CD4-positive, alpha-beta T cell (primary cell): ENCODE measurements at regions of chr12 and their contacts with region 1.

Region 1: GRCh38 chr12:55973598-55974307 is at the start of gene RAB5B:
- DNase-seq: peak; percentile 92 to 100 (median 96)
- ATAC-seq: peak; percentile 86
- H3K4me3 ChIP-seq: peak within 1 kb of the TSS; percentile 74
- H3K4me3 Mint-ChIP-seq: no peak within 1 kb of the TSS
- H3K27ac ChIP-seq: peak within 1 kb of the TSS; percentile 82 to 86
- H3K27ac Mint-ChIP-seq: no peak within 1 kb of the TSS
- H3K4me1 ChIP-seq: peaks cover 26% of the 10 kb centered on the region
- H3K4me1 Mint-ChIP-seq: peaks cover 18% of the 10 kb centered on the region
- H3K27me3 ChIP-seq: no peaks in the 10 kb centered on the region
- H3K27me3 Mint-ChIP-seq: no peaks in the 10 kb centered on the region
- CTCF ChIP-seq: no peak
- total RNA-seq, gene RAB5B: 21.6 to 27.4 TPM

Region 2: GRCh38 chr12:55829967-55830600 is 143.7 kb before region 1 on chr12:
- CTCF ChIA-PET with region 1: no interaction called
- POLR2A ChIA-PET with region 1: interaction called, 39 read pairs
- intact Hi-C with region 1: no loop called
- DNase-seq: peak in 11 of 14 experiments; percentile 4 to 54 (median 21)
- ATAC-seq: peak; percentile 23
- H3K4me3 ChIP-seq: peak overlapping the region; percentile 98
- H3K4me3 Mint-ChIP-seq: peak overlapping the region; percentile 100
- H3K27ac ChIP-seq: peak overlapping the region; percentile 52 to 70
- H3K27ac Mint-ChIP-seq: peak overlapping the region; percentile 88
- H3K4me1 ChIP-seq: peaks cover 58% of the 10 kb centered on the region
- H3K4me1 Mint-ChIP-seq: peaks cover 61% of the 10 kb centered on the region
- H3K27me3 ChIP-seq: no peaks in the 10 kb centered on the region
- H3K27me3 Mint-ChIP-seq: no peaks in the 10 kb centered on the region
- CTCF ChIP-seq: no peak

Region 3: DNA sequence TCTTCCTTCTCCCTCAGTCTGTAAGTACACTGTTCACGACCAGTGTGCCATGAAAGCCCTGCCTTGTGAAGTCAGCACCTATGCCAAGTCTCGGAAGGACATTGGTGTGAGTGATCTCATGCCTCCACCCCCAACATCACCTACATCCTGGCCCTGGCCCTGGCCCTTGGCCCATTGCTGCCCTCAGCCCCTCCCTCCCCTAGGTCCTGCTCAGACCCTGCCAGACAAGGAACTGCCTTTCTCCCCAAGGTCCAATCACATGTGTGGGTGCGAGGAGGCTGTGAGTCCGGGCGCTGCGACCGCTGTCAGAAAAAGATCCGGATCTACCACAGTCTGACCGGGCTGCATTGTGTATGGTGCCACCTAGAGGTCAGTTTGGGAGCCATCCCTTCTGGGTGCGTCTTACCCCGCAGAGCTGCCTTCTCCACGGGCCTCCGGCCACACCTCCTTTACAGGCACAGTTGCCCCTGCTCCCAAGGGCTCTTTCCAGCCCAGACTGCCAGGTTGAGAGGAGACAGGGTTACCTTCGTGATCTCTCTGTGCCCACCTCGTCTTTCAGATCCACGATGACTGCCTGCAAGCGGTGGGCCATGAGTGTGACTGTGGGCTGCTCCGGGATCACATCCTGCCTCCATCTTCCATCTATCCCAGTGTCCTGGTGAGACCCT is 33.6 kb before region 1 on chr12:
- CTCF ChIA-PET with region 1: interaction called, 6 read pairs
- POLR2A ChIA-PET with region 1: interaction called, 57 read pairs
- intact Hi-C with region 1: no loop called
- DNase-seq: peak; percentile 76 to 92 (median 82)
- ATAC-seq: peak; percentile 88
- H3K4me3 ChIP-seq: no peak overlapping the region
- H3K4me3 Mint-ChIP-seq: peak overlapping the region; percentile 72
- H3K27ac ChIP-seq: peak overlapping the region; percentile 42 to 70
- H3K27ac Mint-ChIP-seq: peak overlapping the region; percentile 97
- H3K4me1 ChIP-seq: peaks cover 78% of the 10 kb centered on the region
- H3K4me1 Mint-ChIP-seq: peaks cover 79% of the 10 kb centered on the region
- H3K27me3 ChIP-seq: no peaks in the 10 kb centered on the region
- H3K27me3 Mint-ChIP-seq: no peaks in the 10 kb centered on the region
- CTCF ChIP-seq: peak; percentile 92

Region 4: GRCh38 chr12:56007564-56008559 is 34.1 kb after region 1 on chr12:
- CTCF ChIA-PET with region 1: no interaction called
- POLR2A ChIA-PET with region 1: interaction called, 17 read pairs
- intact Hi-C with region 1: no loop called
- DNase-seq: peak; percentile 57 to 87 (median 64)
- ATAC-seq: peak; percentile 89
- H3K4me3 ChIP-seq: peak overlapping the region; percentile 70
- H3K4me3 Mint-ChIP-seq: peak overlapping the region; percentile 88
- H3K27ac ChIP-seq: peak overlapping the region; percentile 30 to 36
- H3K27ac Mint-ChIP-seq: peak overlapping the region; percentile 76
- H3K4me1 ChIP-seq: peaks cover 22% of the 10 kb centered on the region
- H3K4me1 Mint-ChIP-seq: peaks cover 19% of the 10 kb centered on the region
- H3K27me3 ChIP-seq: no peaks in the 10 kb centered on the region
- H3K27me3 Mint-ChIP-seq: no peaks in the 10 kb centered on the region
- CTCF ChIP-seq: no peak

Region 5: GRCh38 chr12:56127888-56128669 is 154.3 kb after region 1 on chr12 and contains the start of gene ESYT1:
- CTCF ChIA-PET with region 1: no interaction called
- POLR2A ChIA-PET with region 1: interaction called, 12 read pairs
- intact Hi-C with region 1: no loop called
- DNase-seq: peak; percentile 93 to 100 (median 96)
- ATAC-seq: peak; percentile 90
- H3K4me3 ChIP-seq: peak within 1 kb of the TSS; percentile 99
- H3K4me3 Mint-ChIP-seq: peak within 1 kb of the TSS; percentile 97
- H3K27ac ChIP-seq: peak within 1 kb of the TSS; percentile 77
- H3K27ac Mint-ChIP-seq: peak within 1 kb of the TSS; percentile 86
- H3K4me1 ChIP-seq: peaks cover 66% of the 10 kb centered on the region
- H3K4me1 Mint-ChIP-seq: peaks cover 69% of the 10 kb centered on the region
- H3K27me3 ChIP-seq: no peaks in the 10 kb centered on the region
- H3K27me3 Mint-ChIP-seq: no peaks in the 10 kb centered on the region
- CTCF ChIP-seq: no peak
- total RNA-seq, gene ESYT1: 88.5 to 90.3 TPM